ENCODE measurements at regions of chr18 and their contacts with region 1.

Region 1: DNA sequence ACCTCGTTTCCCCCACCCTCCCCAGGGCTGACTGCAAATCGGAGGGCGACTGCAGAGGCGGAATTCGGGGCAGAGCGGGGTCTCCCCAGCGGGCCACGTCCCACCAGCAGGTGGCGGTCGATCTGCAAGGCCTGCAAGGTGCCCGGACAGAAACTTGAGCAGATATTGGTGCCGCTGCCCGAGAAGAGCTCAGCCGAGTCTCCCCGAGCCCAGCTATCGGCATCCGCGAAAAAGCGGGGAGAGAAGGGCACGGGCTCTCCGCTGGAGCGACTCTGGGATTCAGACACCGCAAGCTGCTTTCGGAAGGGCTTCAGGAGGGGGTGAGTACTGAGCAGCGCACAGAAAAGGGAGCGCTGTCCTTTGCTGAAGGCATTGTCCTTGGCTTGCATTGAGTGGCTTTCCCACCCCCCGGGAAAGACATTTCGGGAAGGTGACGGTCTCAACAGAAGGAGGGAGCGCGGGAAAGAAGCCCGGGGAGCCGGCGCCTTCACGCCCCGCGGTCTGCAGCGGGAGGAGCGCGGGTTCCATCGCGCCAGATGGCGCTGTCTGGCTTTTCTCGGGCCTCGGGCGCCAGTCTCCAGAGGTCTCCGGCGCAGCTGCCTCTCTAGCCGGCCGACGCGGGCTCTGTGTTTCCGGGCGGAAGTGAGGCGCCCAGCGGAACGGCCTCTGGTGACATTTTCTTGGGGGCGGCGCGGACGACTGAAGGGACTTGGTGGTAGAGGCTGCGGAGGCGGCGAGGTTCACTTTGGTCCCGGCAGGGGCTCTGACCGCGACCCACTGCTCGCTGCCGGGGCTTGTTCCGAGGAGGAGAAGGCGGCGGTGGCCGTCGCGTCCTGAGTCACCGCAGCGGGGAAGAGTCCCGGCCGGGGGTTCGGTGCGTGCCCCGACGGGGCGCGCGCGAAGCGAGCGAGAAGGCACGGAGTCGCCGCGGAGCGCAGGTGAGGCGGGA is 69.5 kb downstream of the HAUS1 start:
- DNase-seq: peak; percentile 75
- ATAC-seq: peak; percentile 83
- H3K4me3 ChIP-seq: peak overlapping the region; percentile 86
- H3K27ac ChIP-seq: peak overlapping the region; percentile 70
- H3K4me1 ChIP-seq: peaks cover 12% of the 10 kb centered on the region; the same call in 1 of the 2 replicates
- H3K27me3 ChIP-seq: no peaks in the 10 kb centered on the region
- CTCF ChIP-seq: peak; percentile 65

Region 2: GRCh38 chr18:46133534-46133933 is 40.1 kb before region 1 on chr18:
- CTCF ChIA-PET with region 1: no interaction called
- POLR2A ChIA-PET with region 1: interaction called, 18 read pairs
- intact Hi-C with region 1: no loop called
- DNase-seq: no peak
- ATAC-seq: no peak
- H3K4me3 ChIP-seq: no peak overlapping the region
- H3K27ac ChIP-seq: no peak overlapping the region
- H3K4me1 ChIP-seq: no peaks in the 10 kb centered on the region
- H3K27me3 ChIP-seq: no peaks in the 10 kb centered on the region
- CTCF ChIP-seq: no peak

Region 3: DNA sequence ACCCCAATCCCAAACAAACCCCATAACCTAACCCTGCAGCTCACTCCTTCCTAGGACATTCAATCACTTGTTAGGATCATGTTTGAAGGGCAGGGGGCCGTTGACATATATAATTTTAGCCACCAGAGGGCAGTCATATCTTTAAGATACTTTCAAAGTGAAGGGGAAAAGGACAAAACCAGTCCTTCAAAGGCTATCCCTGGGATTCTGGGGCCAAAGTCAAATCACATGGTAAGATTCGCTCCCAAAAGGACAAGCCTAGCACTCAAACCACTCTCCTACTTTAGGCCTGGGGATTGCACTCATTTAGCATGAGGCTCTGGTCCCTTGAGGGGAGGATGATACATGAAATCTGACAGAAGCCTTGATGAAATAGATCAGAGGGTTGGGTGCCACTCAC is 24.9 kb before region 1 on chr18:
- CTCF ChIA-PET with region 1: interaction called, 10 read pairs
- POLR2A ChIA-PET with region 1: interaction called, 11 read pairs
- intact Hi-C with region 1: loop called (anchors 1 kb)
- DNase-seq: peak; percentile 67
- ATAC-seq: peak; percentile 10
- H3K4me3 ChIP-seq: no peak overlapping the region
- H3K27ac ChIP-seq: no peak overlapping the region
- H3K4me1 ChIP-seq: peaks cover 18% of the 10 kb centered on the region
- H3K27me3 ChIP-seq: no peaks in the 10 kb centered on the region
- CTCF ChIP-seq: peak; percentile 66

Region 4: GRCh38 chr18:46199515-46200147 is 26.0 kb after region 1 on chr18:
- CTCF ChIA-PET with region 1: interaction called, 15 read pairs
- POLR2A ChIA-PET with region 1: no interaction called
- intact Hi-C with region 1: no loop called
- DNase-seq: peak; percentile 67
- ATAC-seq: peak; percentile 95
- H3K4me3 ChIP-seq: no peak overlapping the region
- H3K27ac ChIP-seq: no peak overlapping the region
- H3K4me1 ChIP-seq: peaks cover 6% of the 10 kb centered on the region
- H3K27me3 ChIP-seq: no peaks in the 10 kb centered on the region
- CTCF ChIP-seq: no peak

Region 5: GRCh38 chr18:46213295-46213694 is 39.6 kb after region 1 on chr18:
- CTCF ChIA-PET with region 1: interaction called, 3 read pairs
- POLR2A ChIA-PET with region 1: no interaction called
- intact Hi-C with region 1: loop called (anchors 1 kb)
- DNase-seq: peak; percentile 6
- ATAC-seq: no peak
- H3K4me3 ChIP-seq: no peak overlapping the region
- H3K27ac ChIP-seq: no peak overlapping the region
- H3K4me1 ChIP-seq: peaks cover 7% of the 10 kb centered on the region; the same call in 1 of the 2 replicates
- H3K27me3 ChIP-seq: no peaks in the 10 kb centered on the region
- CTCF ChIP-seq: peak; percentile 41; the same call in 1 of the 2 replicates

Region 6: GRCh38 chr18:46660955-46661749 is 487.5 kb after region 1 on chr18:
- CTCF ChIA-PET with region 1: interaction called, 5 read pairs
- POLR2A ChIA-PET with region 1: no interaction called
- intact Hi-C with region 1: loop called (anchors 10 kb)
- DNase-seq: no peak
- ATAC-seq: no peak
- H3K4me3 ChIP-seq: no peak overlapping the region
- H3K27ac ChIP-seq: no peak overlapping the region
- H3K4me1 ChIP-seq: no peaks in the 10 kb centered on the region
- H3K27me3 ChIP-seq: no peaks in the 10 kb centered on the region
- CTCF ChIP-seq: no peak

Measured in PC-3 (cell line).